KBM-7 (cell line): ENCODE measurements at regions of chr6 and their contacts with region 1.

Region 1: GRCh38 chr6:122730775-122731386 is 48.6 kb upstream of the FABP7 start:
- DNase-seq: peak; percentile 58

Region 2: GRCh38 chr6:122491919-122492555 is 238.8 kb before region 1 on chr6:
- in situ Hi-C with region 1: loop called (anchors 25 kb)
- DNase-seq: peak; percentile 82

Region 3: GRCh38 chr6:122839477-122839876 is 108.6 kb after region 1 on chr6:
- in situ Hi-C with region 1: loop called (anchors 25 kb)
- DNase-seq: peak; percentile 69